Activated T-helper 1 cell treated with anti-CD3 and anti-CD28 coated beads, Interleukin-12 subunit alpha, Interleukin-12 subunit beta, Interleukin-2, Interleukin-4 antibody, amounts not matched to agents 30 ng/mL and 10 ng/mL and 1 ng/mL, durations not matched to agents 14 hours and 24 hours and 36 hours (primary cell): ENCODE measurements at regions of chr3 and their contacts with region 1.

Region 1: DNA sequence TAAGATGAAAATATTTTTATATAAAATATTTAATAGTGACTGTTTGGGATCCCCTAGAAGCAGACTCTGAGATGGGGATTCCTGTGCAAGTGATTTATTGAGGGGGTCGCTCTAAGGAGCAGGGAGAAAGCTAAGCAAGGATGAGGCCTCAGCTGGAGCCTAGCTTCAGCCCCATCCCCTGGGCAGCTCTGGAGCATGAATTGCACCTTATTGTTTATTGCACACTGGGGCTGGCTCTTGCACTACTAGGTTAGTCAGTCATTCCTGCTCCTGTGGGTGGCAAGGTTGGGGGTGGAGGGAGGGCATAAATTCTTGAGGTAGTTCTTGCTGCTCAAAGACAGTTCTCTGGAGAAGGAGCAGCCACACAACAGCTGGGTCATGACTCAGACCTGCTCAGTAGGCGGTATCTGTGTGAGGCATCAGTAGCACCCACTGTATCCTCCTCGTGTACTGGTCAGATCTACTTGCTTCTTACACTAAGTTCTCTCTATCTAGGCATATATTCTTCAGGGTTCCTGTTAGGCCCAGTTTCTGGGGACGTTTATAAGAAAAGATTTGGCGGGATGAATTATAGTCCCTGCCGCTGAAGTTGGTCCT is 27.2 kb upstream of the TNFSF10 start:
- DNase-seq: peak; percentile 61
- H3K4me3 Mint-ChIP-seq: peak overlapping the region; percentile 45
- H3K27ac Mint-ChIP-seq: peak overlapping the region; percentile 84
- H3K4me1 Mint-ChIP-seq: peaks cover 76% of the 10 kb centered on the region
- H3K27me3 Mint-ChIP-seq: no peaks in the 10 kb centered on the region

Region 2: DNA sequence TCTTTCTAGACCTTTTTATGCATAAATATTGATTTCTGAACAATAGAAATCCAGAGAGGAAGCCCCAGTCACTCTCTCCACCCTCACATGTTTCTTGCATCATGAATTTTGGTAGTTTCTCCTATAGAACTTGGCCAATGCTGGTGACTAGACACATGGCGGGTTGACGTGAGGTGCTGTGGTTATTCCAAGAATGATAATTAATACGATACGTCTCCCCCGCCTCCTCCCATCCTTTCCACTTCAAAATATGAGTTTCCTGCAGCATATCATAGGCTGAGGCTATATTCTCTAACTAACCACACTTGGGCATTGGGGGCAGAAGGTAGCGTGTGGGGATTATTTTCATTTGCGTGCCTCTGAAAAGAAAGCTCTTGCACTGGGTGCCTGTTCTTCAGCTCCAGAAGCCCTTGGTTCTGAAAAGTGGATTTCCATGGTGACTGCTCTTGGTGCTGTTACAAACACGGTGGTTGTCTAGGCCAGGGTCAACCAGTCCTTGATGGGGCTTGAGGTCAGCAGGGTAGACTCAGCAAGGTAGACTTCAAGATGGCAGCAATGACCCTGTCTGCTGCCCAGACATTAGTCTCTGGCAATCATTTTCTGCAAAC is 32.5 kb before region 1 on chr3:
- intact Hi-C with region 1: loop called (anchors 1 kb)
- DNase-seq: peak; percentile 57
- H3K4me3 Mint-ChIP-seq: peak overlapping the region; percentile 88
- H3K27ac Mint-ChIP-seq: peak overlapping the region; percentile 97
- H3K4me1 Mint-ChIP-seq: peaks cover 80% of the 10 kb centered on the region
- H3K27me3 Mint-ChIP-seq: no peaks in the 10 kb centered on the region

Region 3: GRCh38 chr3:172522871-172523818 is 27.3 kb before region 1 on chr3 and contains the start of gene TNFSF10:
- intact Hi-C with region 1: loop called (anchors 1 kb)
- DNase-seq: peak; percentile 79
- H3K4me3 Mint-ChIP-seq: peak within 1 kb of the TSS; percentile 88
- H3K27ac Mint-ChIP-seq: peak within 1 kb of the TSS; percentile 91
- H3K4me1 Mint-ChIP-seq: peaks cover 59% of the 10 kb centered on the region
- H3K27me3 Mint-ChIP-seq: no peaks in the 10 kb centered on the region
- total RNA-seq, gene TNFSF10: 119 and 123 TPM in 2 replicates

Region 4: DNA sequence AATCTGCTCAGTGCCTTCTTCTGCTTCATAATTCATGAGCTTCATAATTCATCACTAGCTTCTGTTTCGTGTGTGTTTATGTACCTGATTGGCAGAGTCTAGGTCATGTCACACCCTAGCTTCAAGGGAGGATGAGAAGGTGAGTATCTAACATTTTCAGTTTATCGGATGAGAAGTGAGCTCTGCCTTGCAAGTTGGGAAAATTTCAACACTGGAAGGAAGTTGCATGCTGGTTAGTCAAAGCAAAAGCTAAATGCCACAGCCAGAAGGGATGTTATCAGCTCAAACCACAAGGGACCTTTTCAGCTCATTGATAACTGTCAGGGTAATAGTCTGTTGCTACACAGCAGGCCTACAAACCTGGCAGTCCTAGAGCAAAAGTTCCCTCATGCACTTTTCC is 19.9 kb before region 1 on chr3:
- intact Hi-C with region 1: loop called (anchors 1 kb)
- DNase-seq: no peak
- H3K4me3 Mint-ChIP-seq: peak overlapping the region; percentile 50
- H3K27ac Mint-ChIP-seq: peak overlapping the region; percentile 93
- H3K4me1 Mint-ChIP-seq: peaks cover 68% of the 10 kb centered on the region
- H3K27me3 Mint-ChIP-seq: no peaks in the 10 kb centered on the region

Region 5: DNA sequence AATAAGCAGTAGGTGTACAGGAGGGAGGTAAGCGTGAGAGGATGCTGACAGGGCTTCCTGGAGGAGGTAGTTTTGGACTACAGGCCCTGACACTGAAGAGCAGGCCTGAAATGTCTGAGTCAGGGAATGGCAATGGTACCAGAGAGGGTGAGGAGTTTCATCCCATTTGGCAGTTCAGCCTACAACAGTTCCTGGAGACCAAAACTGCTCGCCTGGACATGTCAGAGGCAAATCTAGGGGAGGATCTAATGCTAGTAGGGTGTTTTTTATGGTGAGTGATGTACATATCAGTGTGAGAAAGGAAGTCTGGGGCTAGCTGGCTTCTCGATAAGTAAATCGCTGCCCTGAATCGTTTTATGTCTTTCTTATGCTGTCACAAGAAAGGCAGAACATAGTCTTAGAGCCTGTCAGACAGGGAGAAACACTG is 13.4 kb before region 1 on chr3:
- intact Hi-C with region 1: loop called (anchors 1 kb)
- DNase-seq: no peak
- H3K4me3 Mint-ChIP-seq: peak overlapping the region; percentile 62
- H3K27ac Mint-ChIP-seq: peak overlapping the region; percentile 95
- H3K4me1 Mint-ChIP-seq: peaks cover 68% of the 10 kb centered on the region
- H3K27me3 Mint-ChIP-seq: no peaks in the 10 kb centered on the region

Region 6: GRCh38 chr3:172580680-172581401 is 30.4 kb after region 1 on chr3:
- intact Hi-C with region 1: loop called (anchors 1 kb)
- DNase-seq: no peak
- H3K4me3 Mint-ChIP-seq: peak overlapping the region; percentile 79
- H3K27ac Mint-ChIP-seq: peak overlapping the region; percentile 88
- H3K4me1 Mint-ChIP-seq: peaks cover 97% of the 10 kb centered on the region
- H3K27me3 Mint-ChIP-seq: no peaks in the 10 kb centered on the region

Region 7: DNA sequence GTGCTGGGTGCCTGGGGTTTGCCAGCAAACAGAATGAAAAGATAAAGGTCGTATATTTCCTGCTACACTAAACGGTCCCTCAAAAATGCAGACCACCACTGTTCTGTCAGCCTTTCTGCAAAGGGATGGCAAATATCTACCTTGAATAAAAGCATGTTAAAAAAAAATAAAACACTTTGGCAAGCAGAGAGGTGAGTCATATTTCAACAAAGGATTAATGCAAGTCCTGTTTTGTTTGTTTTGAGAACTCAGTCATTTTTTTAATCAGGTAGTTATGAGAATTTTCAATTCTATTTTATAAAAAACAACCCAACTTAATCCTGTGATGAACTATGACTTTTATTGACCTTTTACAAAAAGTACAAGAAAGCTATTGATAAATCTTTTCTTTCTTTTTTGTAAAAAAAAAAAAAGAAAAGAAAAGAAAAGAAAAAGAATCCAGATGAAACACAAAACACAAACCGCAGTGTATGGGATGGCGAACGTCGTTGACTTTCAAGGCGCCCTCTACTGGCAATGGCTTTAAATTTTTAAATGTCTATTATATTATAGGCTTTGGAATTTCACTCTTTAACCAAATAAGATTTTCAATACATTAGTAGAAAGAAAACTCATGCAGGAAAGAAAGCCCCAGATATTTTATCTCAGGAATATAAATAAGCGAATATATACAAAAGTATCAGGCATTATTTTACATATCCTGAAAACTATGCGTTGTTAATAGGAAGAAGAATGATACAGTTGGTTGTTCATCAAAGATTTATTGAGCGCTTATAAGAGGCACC is 72.7 kb after region 1 on chr3:
- intact Hi-C with region 1: loop called (anchors 2 kb)
- DNase-seq: no peak
- H3K4me3 Mint-ChIP-seq: peak overlapping the region; percentile 50
- H3K27ac Mint-ChIP-seq: no peak overlapping the region
- H3K4me1 Mint-ChIP-seq: peaks cover 25% of the 10 kb centered on the region
- H3K27me3 Mint-ChIP-seq: peaks cover 2% of the 10 kb centered on the region

Region 8: GRCh38 chr3:173173652-173174051 is 623.2 kb after region 1 on chr3:
- intact Hi-C with region 1: no loop called
- DNase-seq: no peak
- H3K4me3 Mint-ChIP-seq: no peak overlapping the region
- H3K27ac Mint-ChIP-seq: no peak overlapping the region
- H3K4me1 Mint-ChIP-seq: no peaks in the 10 kb centered on the region
- H3K27me3 Mint-ChIP-seq: no peaks in the 10 kb centered on the region